AG04449 (cell line): ENCODE measurements at regions of chr3 and their contacts with region 1.

Region 1: DNA sequence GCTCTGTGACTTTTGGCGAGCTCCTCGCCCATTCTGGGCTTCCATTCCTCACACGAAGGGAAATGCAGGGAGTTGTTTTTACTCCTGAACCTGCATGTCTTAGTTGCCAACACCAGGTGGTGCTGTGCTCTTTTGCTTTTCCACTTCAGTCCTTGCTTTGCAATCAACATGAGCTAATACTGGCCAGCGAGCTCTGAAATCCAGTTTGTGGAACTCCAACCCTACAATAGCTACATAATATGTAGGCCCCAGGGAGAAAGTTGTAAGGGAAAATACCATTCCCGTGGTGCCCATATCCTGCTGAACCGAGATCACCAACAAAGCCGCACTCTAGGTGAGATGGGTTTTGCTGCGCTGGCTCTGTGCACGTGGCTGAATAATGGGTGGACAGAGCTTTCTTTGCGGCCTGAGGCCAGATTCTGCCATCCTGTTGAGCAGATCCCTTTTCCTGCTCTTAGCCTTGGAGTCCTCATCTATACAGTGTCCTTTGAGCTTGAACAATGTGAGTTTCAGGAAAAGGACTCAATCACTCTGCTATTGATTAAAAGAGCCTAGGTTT is 25.0 kb downstream of the LSM3 start:
- DNase-seq: peak; percentile 58
- H3K4me3 ChIP-seq: no peak overlapping the region
- CTCF ChIP-seq: peak; percentile 77

Region 2: GRCh38 chr3:14188041-14188754 is 15.4 kb before region 1 on chr3:
- CTCF ChIA-PET with region 1: interaction called, 75 read pairs
- POLR2A ChIA-PET with region 1: no interaction called
- DNase-seq: no peak
- H3K4me3 ChIP-seq: no peak overlapping the region
- CTCF ChIP-seq: no peak

Region 3: DNA sequence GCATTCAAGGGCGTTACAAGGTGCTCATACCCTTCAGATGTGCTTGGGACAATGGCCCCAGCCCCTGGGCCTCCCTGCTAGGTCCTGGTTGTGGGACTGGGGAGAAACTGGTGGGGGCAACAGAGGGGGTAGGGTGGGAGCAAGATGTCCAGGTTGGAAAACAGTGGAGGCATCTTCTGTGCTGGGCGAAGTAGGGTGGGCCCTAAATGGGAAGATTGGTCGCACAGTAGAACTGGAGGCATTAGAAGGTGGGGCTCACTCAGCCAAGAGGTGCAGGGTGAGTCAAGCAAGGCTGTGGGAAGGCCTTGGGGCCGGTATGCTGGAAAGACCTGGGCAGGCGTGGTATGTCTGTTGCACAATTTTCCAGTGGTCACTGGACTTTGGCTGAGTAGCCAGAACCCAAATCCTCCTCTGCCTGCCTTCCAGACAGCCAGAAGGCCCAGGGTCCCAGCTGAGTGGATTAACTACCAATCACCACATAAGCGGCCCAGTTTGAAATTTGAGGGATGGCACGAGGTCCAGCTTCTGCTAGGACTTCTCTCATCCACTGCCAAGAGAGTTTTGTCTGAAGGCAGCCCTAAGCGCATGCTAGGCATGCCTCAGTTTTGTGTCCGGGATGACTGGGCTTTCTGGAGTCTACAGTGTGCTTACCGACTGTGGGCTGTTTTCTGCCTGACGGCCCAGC is 49.6 kb after region 1 on chr3:
- CTCF ChIA-PET with region 1: interaction called, 113 read pairs
- POLR2A ChIA-PET with region 1: no interaction called
- DNase-seq: no peak
- H3K4me3 ChIP-seq: no peak overlapping the region
- CTCF ChIP-seq: no peak

Region 4: DNA sequence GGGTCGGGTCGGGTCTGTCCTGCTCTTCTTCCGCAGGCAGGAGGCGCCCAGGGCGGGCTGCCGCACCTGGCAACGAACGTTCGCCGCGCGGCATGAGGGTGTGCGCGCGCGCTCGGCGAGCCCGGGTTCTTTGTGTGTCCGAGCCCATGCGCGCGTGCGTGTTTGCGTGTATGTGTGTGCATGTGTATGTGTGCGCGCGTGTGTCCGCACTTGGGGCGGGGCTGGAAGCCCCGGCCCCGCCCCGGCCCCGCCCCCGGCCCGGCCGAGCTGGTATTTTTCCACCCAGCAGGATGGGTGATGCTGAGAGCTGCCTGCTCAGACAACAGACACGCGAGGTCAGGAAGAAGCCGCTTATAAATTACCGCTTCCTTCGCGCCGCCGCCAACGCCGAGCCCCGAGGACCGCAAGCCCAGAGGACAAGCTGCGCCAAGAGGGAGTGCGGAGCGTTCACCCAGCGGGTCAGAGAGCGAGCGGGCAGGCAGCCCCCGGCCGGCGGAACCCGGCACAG is 198.8 kb after region 1 on chr3 and contains the start of gene SLC6A6:
- CTCF ChIA-PET with region 1: interaction called, 37 read pairs
- POLR2A ChIA-PET with region 1: interaction called, 3 read pairs
- DNase-seq: peak; percentile 52
- H3K4me3 ChIP-seq: peak within 1 kb of the TSS; percentile 96
- CTCF ChIP-seq: peak; percentile 41

Region 5: DNA sequence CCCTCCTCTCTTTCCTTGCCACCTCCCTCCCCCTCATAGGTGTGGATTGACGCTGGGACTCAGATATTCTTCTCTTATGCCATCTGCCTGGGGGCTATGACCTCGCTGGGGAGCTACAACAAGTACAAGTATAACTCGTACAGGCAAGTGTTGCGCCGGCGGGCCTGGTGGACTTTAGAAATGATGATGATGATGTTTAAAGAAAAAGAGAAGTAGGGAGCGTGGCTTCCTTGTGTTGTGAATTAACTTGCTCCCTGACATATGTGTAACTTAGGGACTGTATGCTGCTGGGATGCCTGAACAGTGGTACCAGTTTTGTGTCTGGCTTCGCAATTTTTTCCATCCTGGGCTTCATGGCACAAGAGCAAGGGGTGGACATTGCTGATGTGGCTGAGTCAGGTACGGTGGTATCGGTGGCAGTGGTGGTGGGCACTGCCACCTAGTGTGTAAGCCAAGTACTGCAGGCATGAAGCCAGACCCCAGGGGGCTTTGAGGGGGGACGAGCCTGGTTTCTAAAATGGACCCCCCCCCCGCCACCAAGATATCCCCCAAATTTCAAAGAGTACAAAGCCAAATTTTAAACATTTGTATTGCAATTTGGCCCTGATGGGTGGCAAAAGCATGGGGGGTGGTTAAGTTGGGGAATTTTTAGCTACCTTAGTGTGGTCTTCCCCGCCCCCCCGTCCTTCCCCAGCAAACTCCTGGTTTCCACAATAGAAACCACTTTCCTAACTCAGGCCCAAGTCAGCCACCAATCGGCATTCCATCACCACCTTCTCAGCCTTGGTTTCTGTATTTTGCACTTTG is 264.4 kb after region 1 on chr3:
- CTCF ChIA-PET with region 1: interaction called, 303 read pairs
- POLR2A ChIA-PET with region 1: interaction called, 3 read pairs
- DNase-seq: no peak
- H3K4me3 ChIP-seq: no peak overlapping the region
- CTCF ChIP-seq: peak; percentile 87

Region 6: DNA sequence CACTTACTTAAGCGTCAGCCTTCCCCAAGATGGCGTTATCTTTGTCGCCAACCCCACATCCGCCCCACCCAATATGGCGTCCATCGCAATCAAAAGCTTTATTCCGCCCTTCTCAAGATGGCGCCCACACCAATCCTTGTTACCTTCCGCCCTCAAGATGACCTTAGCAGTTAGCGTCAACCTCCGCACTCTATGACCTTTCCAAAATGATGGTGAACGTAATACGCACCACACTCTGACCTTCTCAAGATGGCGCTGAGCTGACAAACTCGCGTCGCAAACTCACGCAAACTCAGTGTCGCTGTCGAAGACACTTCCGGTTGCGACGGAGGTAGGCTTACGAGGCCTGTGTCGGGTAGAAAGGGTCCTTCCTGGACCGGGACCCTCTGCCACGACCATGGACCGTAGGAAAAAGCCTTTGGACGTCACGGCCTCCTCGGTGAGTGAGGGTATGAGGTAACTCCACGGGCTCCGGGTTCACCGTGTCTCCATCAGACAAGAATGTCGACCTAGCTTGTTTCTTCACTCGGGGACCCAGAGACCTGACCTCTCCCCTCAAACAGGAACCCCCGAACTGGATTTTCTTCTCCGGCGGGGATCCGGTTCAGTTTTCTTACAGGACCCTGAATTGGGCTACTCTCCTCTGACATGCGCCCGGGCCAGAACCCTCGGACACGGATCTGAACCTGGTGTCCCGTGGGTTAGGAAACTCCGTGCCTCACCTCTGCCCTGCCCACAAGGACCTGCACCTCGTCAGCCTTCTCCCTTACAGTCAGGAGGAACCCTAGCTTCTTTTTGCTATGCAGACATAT is 448.0 kb after region 1 on chr3 and contains the start of gene CCDC174:
- CTCF ChIA-PET with region 1: interaction called, 15 read pairs
- POLR2A ChIA-PET with region 1: no interaction called
- DNase-seq: peak; percentile 97
- H3K4me3 ChIP-seq: peak within 1 kb of the TSS; percentile 90
- CTCF ChIP-seq: no peak